ENCODE measurements at regions of chr17 and their contacts with region 1.

Region 1: GRCh38 chr17:40531051-40531991 is 29.9 kb upstream of the TNS4 start:
- DNase-seq: peak; percentile 73
- ATAC-seq: peak; percentile 22
- H3K4me3 Mint-ChIP-seq: peak overlapping the region; percentile 41
- H3K27ac Mint-ChIP-seq: peak overlapping the region; percentile 80
- H3K4me1 Mint-ChIP-seq: peaks cover 57% of the 10 kb centered on the region
- H3K27me3 Mint-ChIP-seq: peaks cover 21% of the 10 kb centered on the region

Region 2: GRCh38 chr17:40417609-40418427 is 113.5 kb before region 1 on chr17 and contains the start of gene TOP2A:
- CTCF ChIA-PET with region 1: interaction called, 67 read pairs
- DNase-seq: peak; percentile 98
- ATAC-seq: peak; percentile 98
- H3K4me3 Mint-ChIP-seq: peak within 1 kb of the TSS; percentile 89
- H3K27ac Mint-ChIP-seq: peak within 1 kb of the TSS; percentile 95
- H3K4me1 Mint-ChIP-seq: peaks cover 28% of the 10 kb centered on the region
- H3K27me3 Mint-ChIP-seq: peaks cover 6% of the 10 kb centered on the region
- total RNA-seq, gene TOP2A: 310 to 347 TPM

Region 3: GRCh38 chr17:40450175-40450574 is 81.1 kb before region 1 on chr17:
- CTCF ChIA-PET with region 1: interaction called, 115 read pairs
- DNase-seq: peak; percentile 63
- ATAC-seq: no peak
- H3K4me3 Mint-ChIP-seq: no peak overlapping the region
- H3K27ac Mint-ChIP-seq: no peak overlapping the region
- H3K4me1 Mint-ChIP-seq: peaks cover 30% of the 10 kb centered on the region
- H3K27me3 Mint-ChIP-seq: peaks cover 4% of the 10 kb centered on the region

Region 4: GRCh38 chr17:40516581-40517285 is 14.6 kb before region 1 on chr17:
- CTCF ChIA-PET with region 1: interaction called, 48 read pairs
- DNase-seq: peak; percentile 93
- ATAC-seq: peak; percentile 79
- H3K4me3 Mint-ChIP-seq: peak overlapping the region; percentile 70
- H3K27ac Mint-ChIP-seq: peak overlapping the region; percentile 91
- H3K4me1 Mint-ChIP-seq: peaks cover 60% of the 10 kb centered on the region
- H3K27me3 Mint-ChIP-seq: peaks cover 21% of the 10 kb centered on the region

Region 5: DNA sequence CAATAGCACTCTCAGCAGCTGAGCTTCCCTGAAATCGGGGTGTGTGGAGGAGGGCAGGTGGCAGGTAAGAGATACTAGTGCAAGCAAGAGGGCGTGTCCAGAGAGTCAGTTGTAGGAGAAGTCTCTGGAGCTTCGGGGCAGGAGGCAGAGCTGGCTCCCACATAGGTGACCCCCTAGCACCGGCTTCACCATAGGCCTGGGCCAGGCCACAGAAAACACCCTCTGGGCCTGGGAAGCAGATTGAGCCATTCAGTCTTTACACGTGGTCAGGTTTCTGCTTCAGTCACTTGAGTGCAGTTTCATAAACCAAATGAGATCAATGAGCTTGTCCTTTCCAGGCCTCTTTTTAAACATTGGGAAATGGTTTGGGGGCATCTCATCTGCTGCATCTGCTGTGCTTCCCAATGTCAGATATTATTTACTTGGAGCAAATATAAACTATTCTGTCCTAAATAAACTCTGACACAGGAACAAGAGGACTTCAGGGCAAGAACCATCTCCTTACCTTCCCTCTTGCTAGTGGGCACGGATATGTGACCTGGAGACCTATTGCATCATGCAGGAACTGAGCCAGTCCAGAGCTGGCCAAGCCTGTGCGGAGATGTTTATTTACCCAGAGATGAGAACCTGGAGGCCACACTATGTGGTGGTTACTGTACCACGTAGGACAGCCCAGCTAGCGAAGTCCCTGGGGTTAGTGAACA is 17.8 kb after region 1 on chr17:
- CTCF ChIA-PET with region 1: interaction called, 447 read pairs
- DNase-seq: no peak
- ATAC-seq: no peak
- H3K4me3 Mint-ChIP-seq: no peak overlapping the region
- H3K27ac Mint-ChIP-seq: peak overlapping the region; percentile 20
- H3K4me1 Mint-ChIP-seq: peaks cover 73% of the 10 kb centered on the region
- H3K27me3 Mint-ChIP-seq: no peaks in the 10 kb centered on the region

Measured in activated CD8-positive, alpha-beta memory T cell treated with anti-CD3 and anti-CD28 coated beads, Interleukin-2, amount 10 ng/mL, durations not matched to agents 7 days and 5 days (primary cell).